B cell (primary cell): ENCODE measurements at regions of chr1 and their contacts with region 1.

Region 1: DNA sequence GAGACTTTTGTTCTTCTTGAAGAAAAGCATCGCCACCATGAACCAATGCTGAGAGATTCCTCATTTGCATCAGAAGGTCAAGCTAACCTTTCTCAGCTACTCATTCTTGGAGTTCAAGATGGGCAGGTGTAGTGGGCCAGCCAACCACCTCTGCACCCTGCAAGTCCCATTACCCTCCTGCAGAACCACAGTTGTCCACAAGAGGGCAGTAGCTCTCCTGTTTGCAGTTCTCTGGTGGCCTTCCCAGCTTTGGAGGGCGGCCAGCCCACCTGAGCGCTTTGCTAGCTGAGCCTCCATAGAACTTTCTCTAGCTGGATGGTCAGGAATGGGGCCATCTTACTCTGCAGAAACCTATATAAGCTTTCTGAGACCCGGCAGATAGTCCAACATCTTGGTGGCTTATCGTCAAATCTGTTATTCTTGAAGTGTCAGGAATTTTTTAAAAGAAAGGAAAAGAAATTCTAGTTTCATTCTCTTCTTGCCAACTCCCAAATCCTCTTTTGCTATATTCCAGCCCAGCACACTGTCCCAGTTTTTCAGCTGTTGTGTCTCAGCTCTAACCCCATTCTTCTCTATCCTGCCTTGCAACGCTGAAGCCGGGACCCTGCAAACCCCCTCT is 11.0 kb upstream of the LMX1A start:
- DNase-seq: peak; percentile 78
- ATAC-seq: peak; percentile 64
- H3K4me3 ChIP-seq: no peak overlapping the region
- H3K4me3 Mint-ChIP-seq: no peak overlapping the region
- H3K27ac ChIP-seq: no peak overlapping the region
- H3K27ac Mint-ChIP-seq: no peak overlapping the region
- H3K4me1 ChIP-seq: peaks cover 0 to 7% of the 10 kb centered on the region in 2 donors
- H3K4me1 Mint-ChIP-seq: peaks cover 4% of the 10 kb centered on the region
- H3K27me3 ChIP-seq: peaks cover 0 to 38% (median 5%) of the 10 kb centered on the region in 4 experiments
- H3K27me3 Mint-ChIP-seq: peaks cover 72% of the 10 kb centered on the region
- CTCF ChIP-seq: peak; percentile 94

Region 2: GRCh38 chr1:164937291-164937690 is 430.2 kb before region 1 on chr1:
- CTCF ChIA-PET with region 1: no interaction called
- POLR2A ChIA-PET with region 1: no interaction called
- intact Hi-C with region 1: no loop called
- DNase-seq: no peak
- ATAC-seq: no peak
- H3K4me3 ChIP-seq: no peak overlapping the region
- H3K4me3 Mint-ChIP-seq: no peak overlapping the region
- H3K27ac ChIP-seq: no peak overlapping the region
- H3K27ac Mint-ChIP-seq: no peak overlapping the region
- H3K4me1 ChIP-seq: no peaks in the 10 kb centered on the region
- H3K4me1 Mint-ChIP-seq: no peaks in the 10 kb centered on the region
- H3K27me3 ChIP-seq: no peaks in the 10 kb centered on the region
- H3K27me3 Mint-ChIP-seq: no peaks in the 10 kb centered on the region
- CTCF ChIP-seq: no peak

Region 3: DNA sequence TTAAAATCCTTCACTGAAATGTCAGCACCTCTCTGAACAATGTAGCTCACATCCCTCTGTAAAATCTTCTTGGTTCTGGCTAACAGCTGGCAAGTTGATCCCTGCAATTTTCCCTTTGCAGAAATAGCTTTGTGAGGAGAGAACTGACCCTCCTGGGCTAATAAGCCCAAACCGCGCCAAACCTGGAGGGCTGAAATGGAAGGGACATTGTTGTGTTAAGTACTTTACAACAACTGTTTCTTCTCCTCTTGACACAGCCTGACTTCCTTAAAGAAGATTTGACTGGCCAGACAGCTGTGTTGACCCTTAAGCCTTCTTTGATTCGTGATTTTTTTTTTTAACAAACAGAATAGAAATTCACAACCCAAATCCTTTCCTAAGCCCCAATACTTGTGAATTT is 16.6 kb before region 1 on chr1:
- CTCF ChIA-PET with region 1: interaction called, 16 read pairs
- POLR2A ChIA-PET with region 1: no interaction called
- intact Hi-C with region 1: no loop called
- DNase-seq: no peak
- ATAC-seq: no peak
- H3K4me3 ChIP-seq: no peak overlapping the region
- H3K4me3 Mint-ChIP-seq: no peak overlapping the region
- H3K27ac ChIP-seq: no peak overlapping the region
- H3K27ac Mint-ChIP-seq: no peak overlapping the region
- H3K4me1 ChIP-seq: no peaks in the 10 kb centered on the region
- H3K4me1 Mint-ChIP-seq: peaks cover 2% of the 10 kb centered on the region
- H3K27me3 ChIP-seq: peaks cover 0 to 47% (median 42%) of the 10 kb centered on the region in 4 experiments
- H3K27me3 Mint-ChIP-seq: peaks cover 79% of the 10 kb centered on the region
- CTCF ChIP-seq: no peak

Region 4: GRCh38 chr1:165383067-165383466 is 15.6 kb after region 1 on chr1:
- CTCF ChIA-PET with region 1: interaction called, 35 read pairs
- POLR2A ChIA-PET with region 1: no interaction called
- intact Hi-C with region 1: no loop called
- DNase-seq: no peak
- ATAC-seq: no peak
- H3K4me3 ChIP-seq: no peak overlapping the region
- H3K4me3 Mint-ChIP-seq: no peak overlapping the region
- H3K27ac ChIP-seq: no peak overlapping the region
- H3K27ac Mint-ChIP-seq: no peak overlapping the region
- H3K4me1 ChIP-seq: no peaks in the 10 kb centered on the region
- H3K4me1 Mint-ChIP-seq: no peaks in the 10 kb centered on the region
- H3K27me3 ChIP-seq: peaks cover 0 to 49% (median 32%) of the 10 kb centered on the region in 4 experiments
- H3K27me3 Mint-ChIP-seq: peaks cover 70% of the 10 kb centered on the region
- CTCF ChIP-seq: no peak

Region 5: DNA sequence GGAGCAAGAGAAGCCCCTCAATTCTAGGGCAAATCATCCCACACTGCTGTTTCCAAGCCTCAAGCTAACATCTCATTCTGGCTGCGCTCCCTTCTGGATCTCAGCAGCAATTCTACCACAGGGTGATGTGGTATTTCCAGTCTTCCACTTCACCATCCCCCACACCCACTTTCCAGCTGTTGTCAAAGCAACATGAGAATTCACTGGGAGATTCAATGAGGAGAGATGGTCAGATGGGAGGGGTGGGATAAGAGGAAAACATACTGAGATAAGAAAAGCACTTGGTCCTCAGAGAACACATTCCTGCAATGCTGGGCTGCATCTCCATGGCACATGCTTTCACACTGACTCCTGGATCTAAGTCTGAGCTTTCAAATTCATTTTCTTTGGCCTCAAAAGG is 129.0 kb after region 1 on chr1:
- CTCF ChIA-PET with region 1: no interaction called
- POLR2A ChIA-PET with region 1: no interaction called
- intact Hi-C with region 1: no loop called
- DNase-seq: no peak
- ATAC-seq: no peak
- H3K4me3 ChIP-seq: no peak overlapping the region
- H3K4me3 Mint-ChIP-seq: no peak overlapping the region
- H3K27ac ChIP-seq: no peak overlapping the region
- H3K27ac Mint-ChIP-seq: no peak overlapping the region
- H3K4me1 ChIP-seq: no peaks in the 10 kb centered on the region
- H3K4me1 Mint-ChIP-seq: no peaks in the 10 kb centered on the region
- H3K27me3 ChIP-seq: no peaks in the 10 kb centered on the region
- H3K27me3 Mint-ChIP-seq: peaks cover 28% of the 10 kb centered on the region
- CTCF ChIP-seq: no peak

Region 6: GRCh38 chr1:165586435-165586834 is 219.0 kb after region 1 on chr1:
- CTCF ChIA-PET with region 1: interaction called, 86 read pairs
- POLR2A ChIA-PET with region 1: no interaction called
- intact Hi-C with region 1: no loop called
- DNase-seq: no peak
- ATAC-seq: no peak
- H3K4me3 ChIP-seq: no peak overlapping the region
- H3K4me3 Mint-ChIP-seq: no peak overlapping the region
- H3K27ac ChIP-seq: no peak overlapping the region
- H3K27ac Mint-ChIP-seq: no peak overlapping the region
- H3K4me1 ChIP-seq: no peaks in the 10 kb centered on the region
- H3K4me1 Mint-ChIP-seq: no peaks in the 10 kb centered on the region
- H3K27me3 ChIP-seq: peaks cover 0 to 47% (median 31%) of the 10 kb centered on the region in 4 experiments
- H3K27me3 Mint-ChIP-seq: peaks cover 61% of the 10 kb centered on the region
- CTCF ChIP-seq: no peak